ENCODE measurements at regions of chr4 and their contacts with region 1.

Region 1: DNA sequence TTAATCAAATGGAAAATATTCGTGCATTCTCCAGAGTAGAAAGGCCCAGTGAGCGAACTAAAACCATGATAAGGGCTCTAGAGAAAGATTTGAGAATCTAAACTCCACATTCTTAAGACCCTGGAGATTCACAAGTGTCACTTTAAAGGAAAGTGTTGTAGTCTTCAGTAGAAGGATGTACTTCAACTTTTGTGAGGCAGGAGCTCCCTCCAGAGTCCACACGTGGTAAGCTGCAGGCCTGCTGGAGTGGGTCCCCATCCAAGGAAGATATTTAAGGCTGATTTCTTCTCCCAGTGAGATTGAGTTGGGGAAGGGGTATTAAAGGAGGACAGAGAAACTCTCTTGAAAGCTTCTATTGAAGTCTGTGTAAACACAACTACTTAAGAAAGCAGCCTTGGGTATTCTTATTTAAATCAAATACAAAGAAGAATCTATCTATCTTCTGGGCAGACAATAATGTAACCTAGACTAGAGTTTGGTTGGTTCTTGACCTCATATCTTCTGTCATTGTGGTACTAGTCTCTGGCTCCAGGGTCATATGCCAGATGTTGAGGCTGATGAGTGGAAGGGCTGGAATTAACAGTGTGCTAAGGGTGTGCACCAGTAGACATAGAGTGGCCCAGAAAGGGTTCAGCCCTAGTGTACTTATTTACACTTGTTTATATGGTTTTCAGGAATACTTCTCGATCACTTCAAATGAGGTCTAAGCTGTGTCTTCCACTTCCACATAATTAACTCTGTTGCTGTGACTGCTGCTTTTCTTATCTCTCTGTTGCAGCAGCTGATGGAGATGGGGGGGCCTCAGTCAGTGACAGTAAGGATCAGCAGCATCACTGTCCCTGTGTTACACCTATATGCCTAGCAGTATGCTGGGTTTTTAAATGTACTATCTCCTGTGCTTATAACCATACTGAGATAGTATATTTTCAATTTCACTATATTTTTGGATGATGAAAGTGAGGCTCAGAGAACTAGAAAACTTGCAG is 76.1 kb downstream of the HMGB2 start:
- DNase-seq: peak; percentile 32 to 55 (median 51)
- H3K4me3 ChIP-seq: no peak overlapping the region
- H3K4me3 Mint-ChIP-seq: no peak overlapping the region
- H3K27ac ChIP-seq: no peak overlapping the region
- H3K27ac Mint-ChIP-seq: peak overlapping the region in 1 of 7 donors; percentile 34
- H3K4me1 ChIP-seq: no peaks in the 10 kb centered on the region
- H3K4me1 Mint-ChIP-seq: peaks cover 7% of the 10 kb centered on the region
- H3K27me3 ChIP-seq: no peaks in the 10 kb centered on the region
- H3K27me3 Mint-ChIP-seq: no peaks in the 10 kb centered on the region
- CTCF ChIP-seq: peak; percentile 79

Region 2: DNA sequence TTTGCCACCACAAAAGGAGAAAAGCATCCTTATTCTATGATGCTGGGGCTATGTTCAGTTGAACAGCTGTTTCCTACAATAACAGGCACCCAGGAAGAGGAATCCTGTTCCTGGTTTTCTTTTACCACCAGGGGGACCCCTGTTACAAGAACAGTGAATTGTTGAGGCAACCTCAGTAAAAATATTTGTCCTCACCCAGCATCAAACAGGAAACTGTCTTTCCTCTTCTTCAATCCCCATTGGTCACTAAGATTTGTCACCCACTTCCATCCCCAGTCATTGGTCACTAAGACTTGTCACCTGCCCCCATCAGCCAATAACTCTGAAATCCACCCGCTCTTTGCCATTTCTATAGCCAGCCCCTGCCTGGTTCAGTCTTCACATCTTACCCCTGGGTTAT is 232.9 kb before region 1 on chr4:
- intact Hi-C with region 1: loop called in 1 of 2 experiments (anchors 5 kb)
- DNase-seq: peak; percentile 40 to 66 (median 60)
- H3K4me3 ChIP-seq: no peak overlapping the region
- H3K4me3 Mint-ChIP-seq: no peak overlapping the region
- H3K27ac ChIP-seq: no peak overlapping the region
- H3K27ac Mint-ChIP-seq: peak overlapping the region in 2 of 7 donors; percentile 24 to 66
- H3K4me1 ChIP-seq: peaks cover 4 to 5% of the 10 kb centered on the region in 2 donors
- H3K4me1 Mint-ChIP-seq: peaks cover 4% of the 10 kb centered on the region
- H3K27me3 ChIP-seq: no peaks in the 10 kb centered on the region
- H3K27me3 Mint-ChIP-seq: peaks cover 0 to 1% (median 0%) of the 10 kb centered on the region in 3 donors
- CTCF ChIP-seq: peak; percentile 72

Measured in CD14-positive monocyte (primary cell).